MCF 10A (cell line): ENCODE measurements at regions of chr6 and their contacts with region 1.

Region 1: GRCh38 chr6:82270881-82271645 is 23.5 kb upstream of the IBTK start:
- DNase-seq: peak; percentile 60
- H3K4me3 Mint-ChIP-seq: no peak overlapping the region
- H3K27ac Mint-ChIP-seq: no peak overlapping the region
- H3K4me1 Mint-ChIP-seq: peaks cover 9% of the 10 kb centered on the region
- H3K27me3 Mint-ChIP-seq: no peaks in the 10 kb centered on the region
- CTCF ChIP-seq: peak; percentile 55

Region 2: DNA sequence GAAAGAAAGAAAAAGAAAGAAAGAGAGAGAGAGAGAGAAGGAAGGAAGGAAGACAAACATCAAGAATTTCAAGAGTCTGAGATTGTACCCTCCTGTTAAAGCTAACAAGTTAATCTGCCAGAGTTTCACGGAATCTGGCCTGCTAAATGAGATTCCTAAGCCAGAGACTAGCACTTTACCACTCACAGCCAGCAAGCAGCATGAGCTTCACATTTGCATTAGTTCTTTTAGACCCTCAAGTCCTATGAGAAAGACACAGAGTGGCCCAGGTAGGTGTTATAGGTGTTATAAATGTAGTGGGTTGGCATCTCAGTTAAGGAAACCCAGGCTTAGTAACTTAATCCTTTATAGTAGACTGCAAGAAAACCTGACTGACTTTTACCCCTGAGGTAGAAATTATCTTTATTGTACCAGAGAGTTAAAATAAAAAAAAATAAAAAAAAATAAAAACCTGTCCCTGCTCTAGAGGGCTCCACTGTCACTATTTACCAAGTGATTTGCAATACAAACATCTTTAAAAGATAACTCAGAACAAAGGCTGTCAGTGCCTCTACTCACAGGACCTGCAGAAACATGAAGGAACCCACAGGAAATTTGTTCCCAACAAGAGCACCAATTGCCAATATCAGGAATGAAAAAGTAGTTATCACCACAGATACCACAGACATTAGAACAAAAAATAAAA is 13.8 kb before region 1 on chr6:
- CTCF ChIA-PET with region 1: interaction called, 45 read pairs
- POLR2A ChIA-PET with region 1: interaction called, 6 read pairs
- intact Hi-C with region 1: no loop called
- DNase-seq: no peak
- H3K4me3 Mint-ChIP-seq: no peak overlapping the region
- H3K27ac Mint-ChIP-seq: no peak overlapping the region
- H3K4me1 Mint-ChIP-seq: no peaks in the 10 kb centered on the region
- H3K27me3 Mint-ChIP-seq: no peaks in the 10 kb centered on the region
- CTCF ChIP-seq: no peak

Region 3: DNA sequence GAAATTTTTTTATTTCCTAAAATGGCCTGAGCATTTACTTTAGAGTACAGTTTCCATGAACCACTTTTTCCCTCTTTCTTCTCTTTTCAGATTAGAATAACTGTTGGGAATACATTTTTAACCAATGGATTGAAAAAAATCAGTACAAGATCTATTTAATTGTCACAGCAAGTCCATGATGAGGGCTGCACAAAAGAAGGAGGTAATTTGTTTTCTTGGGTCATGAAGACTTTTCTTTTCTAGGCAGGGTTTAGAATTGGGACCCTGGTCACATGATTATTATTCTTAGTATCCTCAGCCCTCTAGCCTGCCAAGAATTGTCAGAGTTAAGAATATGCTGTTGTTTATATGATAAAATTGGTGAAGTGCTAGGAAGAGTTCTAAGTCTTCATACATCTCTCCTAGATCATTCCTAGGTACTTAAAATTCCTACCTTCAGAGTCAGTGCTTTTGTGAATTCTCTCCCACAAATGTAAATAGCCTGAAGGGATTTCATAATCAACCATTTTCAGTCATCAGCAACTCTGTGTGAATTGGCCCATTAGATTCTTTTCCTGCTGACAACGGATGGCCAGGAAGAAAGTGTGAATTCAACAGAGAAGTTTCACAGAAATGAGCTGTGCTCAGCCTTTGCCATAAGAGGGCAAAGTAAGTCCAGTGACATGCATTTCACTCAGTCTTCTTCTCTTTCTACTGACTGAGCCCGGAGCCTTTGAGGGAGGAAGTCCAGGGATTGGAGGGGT is 60.1 kb after region 1 on chr6:
- CTCF ChIA-PET with region 1: interaction called, 9 read pairs
- POLR2A ChIA-PET with region 1: interaction called, 3 read pairs
- intact Hi-C with region 1: loop called (anchors 2 kb)
- DNase-seq: peak; percentile 94
- H3K4me3 Mint-ChIP-seq: peak overlapping the region; percentile 68
- H3K27ac Mint-ChIP-seq: peak overlapping the region; percentile 91
- H3K4me1 Mint-ChIP-seq: peaks cover 34% of the 10 kb centered on the region
- H3K27me3 Mint-ChIP-seq: no peaks in the 10 kb centered on the region
- CTCF ChIP-seq: peak; percentile 38

Region 4: DNA sequence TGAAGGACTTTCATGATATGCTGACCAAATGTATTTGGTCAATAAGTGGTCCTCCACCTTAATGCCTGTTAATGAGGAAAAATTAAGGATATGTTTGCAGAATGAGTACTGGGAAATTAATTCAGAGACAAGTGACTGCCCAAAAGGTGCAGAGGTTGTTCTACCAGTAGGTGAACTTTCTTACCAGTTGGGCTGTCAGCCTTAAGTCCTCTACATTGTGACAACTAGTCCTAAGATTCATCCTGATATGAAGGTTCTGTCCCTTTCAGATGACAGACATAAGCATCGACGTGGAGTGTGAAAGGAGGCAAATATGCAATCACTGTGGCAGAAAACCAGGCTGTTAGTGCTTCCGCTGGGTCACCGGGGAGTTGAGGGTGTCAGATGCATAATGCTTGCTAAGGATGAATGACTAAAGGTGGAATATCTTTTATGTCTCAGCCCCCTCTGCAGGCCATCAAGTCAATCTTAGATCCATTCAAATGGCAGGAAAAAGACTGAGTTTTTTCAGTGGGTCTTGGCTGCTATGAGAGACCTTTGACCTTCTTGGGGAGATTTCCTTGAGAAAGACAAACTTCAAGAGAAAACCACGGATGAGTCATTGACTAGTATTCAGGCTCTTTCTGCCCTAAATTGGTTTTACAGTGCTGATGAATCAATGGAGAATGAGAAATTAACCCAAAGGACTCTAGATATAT is 318.6 kb after region 1 on chr6:
- CTCF ChIA-PET with region 1: interaction called, 4 read pairs
- POLR2A ChIA-PET with region 1: no interaction called
- intact Hi-C with region 1: loop called (anchors 1 kb)
- DNase-seq: peak; percentile 72
- H3K4me3 Mint-ChIP-seq: no peak overlapping the region
- H3K27ac Mint-ChIP-seq: no peak overlapping the region
- H3K4me1 Mint-ChIP-seq: no peaks in the 10 kb centered on the region
- H3K27me3 Mint-ChIP-seq: no peaks in the 10 kb centered on the region
- CTCF ChIP-seq: peak; percentile 30

Region 5: DNA sequence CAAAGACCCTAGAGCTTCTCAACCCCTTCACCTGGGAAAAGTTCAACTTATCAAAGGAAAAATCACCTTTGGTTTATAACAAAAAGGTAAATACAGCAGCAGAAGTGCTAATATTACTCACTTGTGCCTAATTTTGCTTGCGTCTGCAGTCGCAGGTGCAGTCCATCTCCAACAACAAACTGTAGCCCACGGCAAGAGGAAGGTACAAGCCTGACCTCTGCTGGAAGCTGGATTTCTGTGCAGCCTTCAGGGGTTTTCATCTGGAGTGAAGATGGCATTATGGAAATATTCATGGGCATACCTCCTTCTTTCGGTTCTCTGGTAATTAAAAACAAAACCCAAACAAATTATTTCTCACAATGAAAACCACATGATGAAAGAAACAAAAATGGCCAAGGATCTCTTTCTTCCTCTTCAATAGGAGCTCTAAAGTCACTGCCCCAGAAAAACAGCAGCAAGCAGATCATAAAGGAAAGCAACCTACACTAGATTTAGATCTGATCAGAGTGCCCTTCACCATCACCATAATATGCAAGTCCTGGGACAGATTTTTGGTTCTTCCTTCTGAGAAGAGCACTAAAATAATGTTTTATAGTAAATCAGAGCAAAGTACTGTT is 786.8 kb after region 1 on chr6:
- CTCF ChIA-PET with region 1: interaction called, 196 read pairs
- POLR2A ChIA-PET with region 1: interaction called, 5 read pairs
- intact Hi-C with region 1: loop called (anchors 1 kb)
- DNase-seq: peak; percentile 68
- H3K4me3 Mint-ChIP-seq: no peak overlapping the region
- H3K27ac Mint-ChIP-seq: no peak overlapping the region
- H3K4me1 Mint-ChIP-seq: peaks cover 5% of the 10 kb centered on the region
- H3K27me3 Mint-ChIP-seq: no peaks in the 10 kb centered on the region
- CTCF ChIP-seq: peak; percentile 73